HepG2 (cell line): ENCODE measurements at regions of chr11 and their contacts with region 1.

Region 1: DNA sequence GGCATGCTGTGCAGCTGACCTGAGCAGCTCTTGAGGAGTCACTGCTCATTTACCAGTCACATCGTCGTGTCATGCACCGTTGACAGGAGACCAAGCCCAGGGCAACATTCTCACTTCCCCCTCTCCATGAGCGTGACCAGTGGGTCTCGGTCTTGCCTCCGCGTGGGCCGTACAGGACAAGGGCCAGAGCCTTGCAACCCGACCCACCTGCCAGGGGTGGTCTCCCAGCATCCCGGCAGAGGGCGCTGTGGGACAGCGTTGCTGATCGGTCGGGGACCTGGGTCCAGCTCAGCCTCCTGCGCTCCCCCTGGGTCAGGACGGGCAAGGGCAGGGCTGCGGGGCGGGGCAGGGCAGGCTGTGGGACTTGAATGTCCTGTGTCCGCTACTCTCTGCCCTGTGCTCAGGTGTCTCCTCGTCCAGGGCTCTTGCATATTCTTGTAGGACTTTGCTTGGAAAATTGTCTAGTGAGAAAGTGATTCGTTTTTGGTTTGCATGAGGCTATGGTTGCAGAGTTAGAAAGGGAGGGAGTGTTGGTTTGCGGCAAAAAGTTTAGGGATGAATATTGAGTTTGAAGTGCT is 16.2 kb downstream of the EIF4G2 start:
- DNase-seq: peak; percentile 77
- ATAC-seq: peak; percentile 91
- H3K4me3 ChIP-seq: peak overlapping the region in 2 of 3 experiments; percentile 1 to 35; a peak in 1 of 6 replicates
- H3K27ac ChIP-seq: no peak overlapping the region
- H3K4me1 ChIP-seq: peaks cover 10% of the 10 kb centered on the region; the same call in 1 of the 2 replicates
- H3K27me3 ChIP-seq: peaks cover 0 to 18% of the 10 kb centered on the region in 2 experiments; a peak in 3 of 5 replicates
- CTCF ChIP-seq: peak; percentile 100
- EP300 ChIP-seq: no peak
- POLR2A ChIP-seq: no peak
- RAD21 ChIP-seq: peak; percentile 94

Region 2: GRCh38 chr11:10906513-10906912 is 114.0 kb after region 1 on chr11:
- CTCF ChIA-PET with region 1: interaction called, 3 read pairs
- POLR2A ChIA-PET with region 1: no interaction called
- in situ Hi-C with region 1: loop called (anchors 5 kb)
- intact Hi-C with region 1: loop called (anchors 1 kb)
- DNase-seq: no peak
- ATAC-seq: peak; percentile 27; the same call in 1 of the 3 replicates
- H3K4me3 ChIP-seq: no peak overlapping the region
- H3K27ac ChIP-seq: no peak overlapping the region
- H3K4me1 ChIP-seq: no peaks in the 10 kb centered on the region
- H3K27me3 ChIP-seq: no peaks in the 10 kb centered on the region; a peak in 1 of 5 replicates
- CTCF ChIP-seq: peak; percentile 34
- EP300 ChIP-seq: no peak
- POLR2A ChIP-seq: no peak
- RAD21 ChIP-seq: no peak

Region 3: DNA sequence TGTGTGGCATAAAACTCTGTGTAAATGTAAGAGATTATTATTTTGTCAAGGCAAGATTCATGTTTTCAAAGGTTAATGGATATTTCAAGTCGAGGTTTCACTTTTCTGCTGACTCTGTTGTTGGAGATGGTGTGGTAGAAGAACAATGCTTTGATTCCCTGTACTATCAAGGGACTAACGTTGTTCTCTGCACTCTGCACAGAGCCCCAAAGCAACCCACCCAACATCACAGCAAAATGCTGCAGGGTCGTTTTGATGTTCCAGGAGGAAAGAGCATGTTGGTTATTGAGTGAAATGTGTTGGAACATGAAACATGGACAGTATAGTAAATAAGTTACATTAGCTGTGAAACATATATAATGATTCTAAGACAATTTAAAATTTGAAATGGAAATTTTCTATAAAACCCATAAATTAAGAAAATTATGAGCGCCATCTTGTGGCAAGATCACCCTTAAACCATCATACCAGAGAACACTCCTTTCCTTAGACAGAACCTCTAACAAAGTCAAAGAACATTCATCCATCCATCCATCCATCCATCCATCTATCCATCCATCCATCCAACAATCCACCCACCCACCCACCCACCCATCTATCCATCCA is 229.7 kb after region 1 on chr11:
- CTCF ChIA-PET with region 1: interaction called, 13 read pairs
- POLR2A ChIA-PET with region 1: no interaction called
- in situ Hi-C with region 1: loop called (anchors 5 kb)
- intact Hi-C with region 1: loop called (anchors 5 kb)
- DNase-seq: no peak
- ATAC-seq: no peak
- H3K4me3 ChIP-seq: no peak overlapping the region
- H3K27ac ChIP-seq: no peak overlapping the region
- H3K4me1 ChIP-seq: no peaks in the 10 kb centered on the region
- H3K27me3 ChIP-seq: 0 out of 5 replicates have a peak, but pooled peaks cover 0 to 3% of the 10 kb centered on the region in 2 experiments
- CTCF ChIP-seq: 0 out of 2 replicates have a peak, but pooled peaks have one; percentile 27
- EP300 ChIP-seq: no peak
- POLR2A ChIP-seq: no peak
- RAD21 ChIP-seq: no peak